Activated T-helper 1 cell treated with anti-CD3 and anti-CD28 coated beads, Interleukin-12 subunit alpha, Interleukin-12 subunit beta, Interleukin-2, Interleukin-4 antibody, amounts not matched to agents 30 ng/mL and 10 ng/mL and 1 ng/mL, durations not matched to agents 14 hours and 24 hours and 36 hours (primary cell): ENCODE measurements at regions of chr18 and their contacts with region 1.

Region 1: DNA sequence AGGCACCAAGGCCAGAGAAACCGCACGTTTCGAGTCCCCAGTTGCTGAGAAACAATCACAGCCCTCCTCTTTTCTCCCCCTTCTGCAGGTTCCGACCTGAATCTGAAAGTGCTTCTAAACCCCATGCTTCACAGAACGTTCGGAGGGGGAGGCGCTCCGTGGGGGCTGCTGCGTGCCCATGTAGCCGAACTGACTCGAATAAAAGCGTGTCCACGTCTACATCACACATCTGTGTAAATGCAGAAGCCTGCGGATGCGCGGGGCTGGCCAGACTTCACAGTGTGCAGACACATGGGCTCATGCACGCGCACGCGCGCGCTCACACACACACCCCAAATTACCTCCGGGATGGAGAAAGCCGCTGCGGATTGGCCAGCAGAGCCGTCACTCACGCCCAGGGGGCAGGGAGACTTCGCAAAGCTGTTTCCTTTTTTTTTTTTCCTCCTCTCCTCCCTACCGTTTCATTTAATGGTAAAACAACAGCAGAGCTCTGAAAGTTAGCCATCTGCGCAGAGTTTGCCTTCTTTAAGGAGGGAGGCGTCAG is 2.3 kb downstream of the ZNF516 start:
- DNase-seq: peak; percentile 97
- H3K4me3 Mint-ChIP-seq: peak overlapping the region; percentile 96
- H3K27ac Mint-ChIP-seq: peak overlapping the region; percentile 81
- H3K4me1 Mint-ChIP-seq: peaks cover 37% of the 10 kb centered on the region
- H3K27me3 Mint-ChIP-seq: peaks cover 75% of the 10 kb centered on the region

Region 2: DNA sequence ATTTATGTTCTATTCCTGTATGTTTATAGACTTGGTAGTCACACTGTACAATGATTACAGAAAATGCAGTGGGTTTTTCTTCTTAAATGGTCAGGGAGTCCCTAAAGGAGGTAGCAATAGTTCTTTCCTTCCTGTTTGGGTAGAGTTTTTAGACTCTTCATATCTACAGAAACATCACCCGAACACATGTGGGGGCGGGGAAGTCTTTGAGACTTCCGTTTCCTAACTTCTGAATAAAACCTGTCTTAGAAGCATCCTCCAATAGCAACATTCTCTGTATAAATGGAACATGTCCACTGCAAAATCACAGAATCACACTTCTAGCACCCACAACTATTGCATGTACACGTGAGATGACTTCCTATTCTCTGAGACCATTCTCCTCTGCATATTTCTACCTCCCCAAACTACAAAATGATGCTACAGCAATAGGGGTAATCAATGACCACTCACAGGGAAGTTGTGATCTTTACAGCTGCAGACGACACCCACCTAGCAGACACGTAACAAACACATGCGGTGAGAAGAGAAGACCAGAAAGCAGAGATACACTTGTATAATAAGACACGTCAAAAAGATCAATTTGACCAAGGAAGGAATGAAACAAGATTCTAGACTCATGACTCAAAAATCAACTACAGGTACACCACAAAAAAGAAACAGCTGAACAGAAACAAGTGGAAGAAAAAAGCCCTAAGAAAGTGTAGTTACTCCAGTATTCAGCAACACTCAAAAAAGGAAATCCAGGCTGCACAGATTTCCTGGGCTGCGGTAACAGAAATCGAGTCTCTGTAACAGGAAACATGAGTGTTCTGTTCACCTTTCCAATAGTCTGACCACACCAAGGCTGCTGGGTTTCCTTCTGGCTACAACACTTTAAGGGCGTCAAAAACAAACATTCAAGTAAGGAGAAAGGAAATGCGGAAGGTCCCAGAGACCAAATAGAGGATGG is 118.1 kb before region 1 on chr18:
- intact Hi-C with region 1: loop called (anchors 1 kb)
- DNase-seq: peak; percentile 50
- H3K4me3 Mint-ChIP-seq: peak overlapping the region; percentile 8
- H3K27ac Mint-ChIP-seq: peak overlapping the region; percentile 70
- H3K4me1 Mint-ChIP-seq: peaks cover 40% of the 10 kb centered on the region
- H3K27me3 Mint-ChIP-seq: peaks cover 12% of the 10 kb centered on the region

Region 3: DNA sequence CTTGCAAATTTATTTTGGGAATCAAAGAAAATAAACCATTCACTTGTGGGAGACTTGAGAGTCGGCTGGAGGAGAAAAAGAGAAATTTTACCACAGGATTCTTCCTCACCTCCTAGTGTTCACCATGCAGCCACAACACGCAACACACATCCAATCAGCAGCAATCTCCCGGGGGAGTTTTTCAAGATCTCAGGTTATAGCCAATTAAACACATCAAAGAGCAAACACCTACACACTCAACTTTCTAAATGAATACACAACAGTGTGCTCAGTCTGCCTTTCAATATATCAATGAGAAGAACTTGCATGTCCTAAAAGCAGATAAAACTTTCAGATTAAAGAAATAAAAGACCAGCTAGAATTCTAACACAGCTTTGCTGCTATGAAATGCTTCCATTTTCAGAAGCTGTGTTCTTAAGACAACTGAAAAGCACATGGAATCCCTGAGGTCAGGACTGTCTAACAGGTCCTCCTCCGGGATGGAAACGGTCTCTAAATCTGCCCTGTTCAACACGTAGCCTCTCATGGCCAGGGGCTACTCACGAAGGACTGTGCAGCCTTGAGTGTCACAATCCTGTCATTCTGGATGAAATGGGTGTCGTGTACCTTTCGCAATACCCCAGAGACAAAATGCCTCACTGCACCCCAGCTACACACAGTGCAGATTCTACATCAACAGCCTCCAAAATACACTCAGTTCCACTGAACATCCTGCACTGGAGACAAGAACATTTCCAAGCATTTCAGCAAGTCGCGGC is 81.9 kb before region 1 on chr18:
- intact Hi-C with region 1: loop called (anchors 2 kb)
- DNase-seq: no peak
- H3K4me3 Mint-ChIP-seq: no peak overlapping the region
- H3K27ac Mint-ChIP-seq: peak overlapping the region; percentile 9
- H3K4me1 Mint-ChIP-seq: peaks cover 12% of the 10 kb centered on the region
- H3K27me3 Mint-ChIP-seq: peaks cover 21% of the 10 kb centered on the region

Region 4: GRCh38 chr18:76518123-76518859 is 25.6 kb after region 1 on chr18:
- intact Hi-C with region 1: loop called (anchors 2 kb)
- DNase-seq: no peak
- H3K4me3 Mint-ChIP-seq: no peak overlapping the region
- H3K27ac Mint-ChIP-seq: no peak overlapping the region
- H3K4me1 Mint-ChIP-seq: no peaks in the 10 kb centered on the region
- H3K27me3 Mint-ChIP-seq: peaks cover 32% of the 10 kb centered on the region

Region 5: GRCh38 chr18:77067291-77068061 is 574.7 kb after region 1 on chr18:
- intact Hi-C with region 1: loop called (anchors 10 kb)
- DNase-seq: peak; percentile 75
- H3K4me3 Mint-ChIP-seq: peak overlapping the region; percentile 76
- H3K27ac Mint-ChIP-seq: peak overlapping the region; percentile 96
- H3K4me1 Mint-ChIP-seq: peaks cover 100% of the 10 kb centered on the region
- H3K27me3 Mint-ChIP-seq: no peaks in the 10 kb centered on the region